Activated CD4-positive, alpha-beta memory T cell treated with anti-CD3 and anti-CD28 coated beads for 36 hours (primary cell): ENCODE measurements at regions of chr16 and their contacts with region 1.

Region 1: GRCh38 chr16:19223235-19224170 is 55.5 kb downstream of the SYT17 start:
- DNase-seq: peak; percentile 66
- H3K4me3 Mint-ChIP-seq: no peak overlapping the region
- H3K27ac Mint-ChIP-seq: no peak overlapping the region
- H3K4me1 Mint-ChIP-seq: no peaks in the 10 kb centered on the region
- H3K27me3 Mint-ChIP-seq: peaks cover 5% of the 10 kb centered on the region

Region 2: GRCh38 chr16:19236561-19237209 is 13.2 kb after region 1 on chr16:
- CTCF ChIA-PET with region 1: interaction called, 11 read pairs
- POLR2A ChIA-PET with region 1: no interaction called
- intact Hi-C with region 1: no loop called
- DNase-seq: no peak
- H3K4me3 Mint-ChIP-seq: no peak overlapping the region
- H3K27ac Mint-ChIP-seq: no peak overlapping the region
- H3K4me1 Mint-ChIP-seq: no peaks in the 10 kb centered on the region
- H3K27me3 Mint-ChIP-seq: peaks cover 1% of the 10 kb centered on the region